B cell (primary cell): ENCODE measurements at regions of chr2 and their contacts with region 1.

Region 1: DNA sequence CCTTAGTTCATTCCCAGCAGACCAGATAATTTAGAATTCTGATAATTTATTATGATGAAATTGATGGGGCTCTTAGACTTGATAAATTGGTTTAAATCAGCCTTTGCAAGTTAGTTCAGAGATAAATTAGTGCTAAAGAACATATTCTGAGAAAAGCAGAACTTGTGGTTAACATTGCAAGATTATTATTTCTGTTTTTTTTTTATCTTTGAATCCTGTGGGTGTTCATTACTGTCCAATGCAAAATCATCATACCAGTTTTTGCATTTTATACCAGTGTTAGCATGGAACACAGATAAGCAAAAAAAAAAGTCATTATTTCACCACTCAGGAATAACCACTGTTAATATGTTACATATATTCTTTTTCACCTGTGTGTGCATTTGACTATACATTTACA is 9.1 kb downstream of the SEPTIN2 start:
- DNase-seq: peak; percentile 34
- ATAC-seq: peak; percentile 64
- H3K4me3 ChIP-seq: peak overlapping the region in 1 of 5 experiments; percentile 17
- H3K4me3 Mint-ChIP-seq: peak overlapping the region; percentile 51
- H3K27ac ChIP-seq: no peak overlapping the region
- H3K27ac Mint-ChIP-seq: no peak overlapping the region
- H3K4me1 ChIP-seq: peaks cover 25 to 27% of the 10 kb centered on the region in 2 donors
- H3K4me1 Mint-ChIP-seq: peaks cover 49% of the 10 kb centered on the region
- H3K27me3 ChIP-seq: no peaks in the 10 kb centered on the region
- H3K27me3 Mint-ChIP-seq: no peaks in the 10 kb centered on the region
- CTCF ChIP-seq: no peak

Region 2: DNA sequence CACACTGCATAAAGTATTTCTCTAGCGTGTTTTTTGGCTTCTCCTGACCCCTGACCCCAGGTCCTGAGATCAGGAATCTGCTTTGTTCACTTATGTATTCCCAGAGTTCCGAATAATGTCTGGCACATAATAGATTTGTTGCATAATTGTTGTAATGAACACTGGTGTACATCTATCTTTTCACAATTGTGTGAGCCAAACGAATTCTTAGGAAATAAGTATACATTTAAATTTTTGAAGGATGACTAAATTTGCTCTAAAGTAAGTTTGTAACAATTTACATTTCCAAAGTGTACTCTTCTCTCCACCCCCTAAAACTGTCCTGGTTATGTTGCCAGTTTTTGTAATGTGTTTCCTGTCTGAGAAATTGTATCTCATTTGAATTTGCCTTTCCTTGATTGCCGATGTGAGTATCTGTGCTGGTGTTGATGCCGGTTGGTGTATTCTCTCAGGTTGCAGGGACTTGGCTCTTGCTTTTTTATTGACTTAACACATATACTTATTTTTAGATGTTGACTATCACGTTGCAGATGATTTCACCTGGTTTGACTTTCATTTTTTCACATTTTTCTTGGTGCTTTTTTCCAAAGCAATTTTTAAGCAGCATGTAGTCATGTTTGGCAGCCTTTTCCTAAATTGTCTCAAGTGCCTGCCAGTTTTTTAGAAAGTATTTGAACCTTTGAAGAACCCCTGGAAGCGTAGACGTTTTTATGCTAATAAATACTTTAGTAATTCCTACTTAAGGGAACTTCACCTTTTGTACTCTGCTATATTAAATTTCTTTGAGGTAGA is 15.3 kb after region 1 on chr2:
- CTCF ChIA-PET with region 1: interaction called, 4 read pairs
- POLR2A ChIA-PET with region 1: interaction called, 12 read pairs
- intact Hi-C with region 1: no loop called
- DNase-seq: no peak
- ATAC-seq: no peak
- H3K4me3 ChIP-seq: no peak overlapping the region
- H3K4me3 Mint-ChIP-seq: no peak overlapping the region
- H3K27ac ChIP-seq: no peak overlapping the region
- H3K27ac Mint-ChIP-seq: no peak overlapping the region
- H3K4me1 ChIP-seq: peaks cover 10 to 15% of the 10 kb centered on the region in 2 donors
- H3K4me1 Mint-ChIP-seq: peaks cover 18% of the 10 kb centered on the region
- H3K27me3 ChIP-seq: no peaks in the 10 kb centered on the region
- H3K27me3 Mint-ChIP-seq: no peaks in the 10 kb centered on the region
- CTCF ChIP-seq: no peak

Region 3: GRCh38 chr2:241368643-241369042 is 43.9 kb after region 1 on chr2:
- CTCF ChIA-PET with region 1: no interaction called
- POLR2A ChIA-PET with region 1: interaction called, 10 read pairs
- intact Hi-C with region 1: no loop called
- DNase-seq: no peak
- ATAC-seq: no peak
- H3K4me3 ChIP-seq: no peak overlapping the region
- H3K4me3 Mint-ChIP-seq: no peak overlapping the region
- H3K27ac ChIP-seq: no peak overlapping the region
- H3K27ac Mint-ChIP-seq: peak overlapping the region; percentile 10
- H3K4me1 ChIP-seq: peaks cover 30 to 43% of the 10 kb centered on the region in 2 donors
- H3K4me1 Mint-ChIP-seq: peaks cover 69% of the 10 kb centered on the region
- H3K27me3 ChIP-seq: no peaks in the 10 kb centered on the region
- H3K27me3 Mint-ChIP-seq: no peaks in the 10 kb centered on the region
- CTCF ChIP-seq: no peak